ENCODE measurements at regions of chr9 and their contacts with region 1.

Region 1: GRCh38 chr9:124133727-124134126 is 122.2 kb downstream of the LHX2 start:
- DNase-seq: peak; percentile 61 to 70 (median 69)
- ATAC-seq: peak; percentile 84 to 98 (median 96)
- H3K4me3 ChIP-seq: no peak overlapping the region
- H3K27ac ChIP-seq: no peak overlapping the region
- H3K4me1 ChIP-seq: no peaks in the 10 kb centered on the region
- H3K27me3 ChIP-seq: no peaks in the 10 kb centered on the region
- CTCF ChIP-seq: peak; percentile 43 to 55 (median 48)
- POLR2A ChIP-seq: no peak

Region 2: DNA sequence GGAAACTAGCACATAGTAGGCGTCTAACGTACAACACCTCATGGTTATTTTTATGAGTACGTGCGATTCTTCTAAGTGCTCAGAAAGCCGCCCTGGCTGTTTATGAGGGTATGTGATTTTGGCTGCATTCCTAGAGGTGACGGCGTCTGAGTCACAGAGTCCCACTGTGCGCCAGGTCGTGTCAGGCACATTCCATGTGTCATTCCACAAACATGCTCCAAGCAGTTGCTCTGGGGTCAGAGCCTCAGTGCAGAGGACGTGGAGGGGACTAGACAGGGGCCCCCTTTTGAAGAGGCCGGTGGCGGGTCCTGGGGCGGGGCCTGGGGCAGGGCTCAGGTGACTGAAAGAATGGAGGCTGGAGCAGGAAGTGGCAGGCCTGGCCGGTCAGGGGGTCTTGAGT is 175.9 kb after region 1 on chr9:
- intact Hi-C with region 1: loop called in 1 of 2 experiments (anchors 10 kb)
- DNase-seq: no peak
- ATAC-seq: peak in 1 of 4 donors; percentile 20
- H3K4me3 ChIP-seq: no peak overlapping the region
- H3K27ac ChIP-seq: no peak overlapping the region
- H3K4me1 ChIP-seq: no peaks in the 10 kb centered on the region
- H3K27me3 ChIP-seq: no peaks in the 10 kb centered on the region
- CTCF ChIP-seq: no peak
- POLR2A ChIP-seq: no peak

Region 3: GRCh38 chr9:124320062-124320973 is 186.6 kb after region 1 on chr9:
- intact Hi-C with region 1: loop called (anchors 10 kb)
- DNase-seq: peak; percentile 51 to 77 (median 74)
- ATAC-seq: peak; percentile 75 to 91 (median 85)
- H3K4me3 ChIP-seq: no peak overlapping the region
- H3K27ac ChIP-seq: no peak overlapping the region
- H3K4me1 ChIP-seq: no peaks in the 10 kb centered on the region
- H3K27me3 ChIP-seq: no peaks in the 10 kb centered on the region
- CTCF ChIP-seq: peak; percentile 76 to 83 (median 82)
- POLR2A ChIP-seq: no peak